AG04450 (cell line): ENCODE measurements at regions of chr2 and their contacts with region 1.

Region 1: DNA sequence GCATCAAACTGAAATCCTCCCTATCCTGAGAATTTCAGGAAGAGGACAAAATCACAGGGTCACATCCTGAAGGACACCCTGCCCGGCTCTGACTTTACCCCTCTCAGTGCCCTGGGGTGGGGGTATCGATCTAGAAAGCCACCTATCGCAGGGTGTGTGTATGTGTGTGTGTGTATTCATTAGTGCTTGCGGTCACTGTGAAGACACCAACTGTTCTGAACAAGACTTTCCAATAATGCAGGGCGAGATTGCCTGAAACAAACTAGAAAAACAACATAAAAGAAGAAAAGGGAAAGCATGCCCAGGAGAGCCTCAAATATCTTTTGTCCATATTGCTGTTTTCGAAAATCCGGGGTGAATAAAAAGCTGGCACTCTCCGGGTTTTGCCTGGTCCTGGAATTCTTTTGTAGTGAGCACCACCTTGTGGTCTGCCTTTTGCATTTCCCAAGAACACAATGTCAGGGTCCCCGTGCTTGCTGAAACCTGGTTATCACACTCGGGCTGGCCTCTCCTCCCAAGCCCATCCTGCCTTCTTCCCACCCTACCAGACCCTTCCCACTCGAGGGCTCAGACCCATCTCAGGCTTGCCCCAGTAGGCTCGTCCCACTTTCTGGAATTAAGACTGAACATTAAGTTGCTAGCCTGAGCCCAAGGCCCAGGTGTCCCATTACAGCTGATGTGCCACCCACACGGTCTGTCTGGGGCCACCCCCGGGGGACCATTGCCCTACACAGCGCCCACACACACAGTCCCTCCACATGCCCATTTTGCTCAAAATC is 25.0 kb upstream of the COPS8 start:
- DNase-seq: peak; percentile 30
- H3K4me3 ChIP-seq: no peak overlapping the region
- H3K27ac ChIP-seq: no peak overlapping the region
- H3K27me3 ChIP-seq: no peaks in the 10 kb centered on the region
- CTCF ChIP-seq: peak; percentile 73

Region 2: GRCh38 chr2:236343400-236344161 is 717.1 kb before region 1 on chr2:
- CTCF ChIA-PET with region 1: interaction called, 43 read pairs
- POLR2A ChIA-PET with region 1: no interaction called
- DNase-seq: peak; percentile 39
- H3K4me3 ChIP-seq: no peak overlapping the region
- H3K27ac ChIP-seq: no peak overlapping the region
- H3K27me3 ChIP-seq: no peaks in the 10 kb centered on the region
- CTCF ChIP-seq: peak; percentile 92

Region 3: GRCh38 chr2:236352761-236353593 is 707.7 kb before region 1 on chr2:
- CTCF ChIA-PET with region 1: interaction called, 57 read pairs
- POLR2A ChIA-PET with region 1: no interaction called
- DNase-seq: no peak
- H3K4me3 ChIP-seq: no peak overlapping the region
- H3K27ac ChIP-seq: no peak overlapping the region
- H3K27me3 ChIP-seq: peaks cover 3% of the 10 kb centered on the region
- CTCF ChIP-seq: peak; percentile 82

Region 4: DNA sequence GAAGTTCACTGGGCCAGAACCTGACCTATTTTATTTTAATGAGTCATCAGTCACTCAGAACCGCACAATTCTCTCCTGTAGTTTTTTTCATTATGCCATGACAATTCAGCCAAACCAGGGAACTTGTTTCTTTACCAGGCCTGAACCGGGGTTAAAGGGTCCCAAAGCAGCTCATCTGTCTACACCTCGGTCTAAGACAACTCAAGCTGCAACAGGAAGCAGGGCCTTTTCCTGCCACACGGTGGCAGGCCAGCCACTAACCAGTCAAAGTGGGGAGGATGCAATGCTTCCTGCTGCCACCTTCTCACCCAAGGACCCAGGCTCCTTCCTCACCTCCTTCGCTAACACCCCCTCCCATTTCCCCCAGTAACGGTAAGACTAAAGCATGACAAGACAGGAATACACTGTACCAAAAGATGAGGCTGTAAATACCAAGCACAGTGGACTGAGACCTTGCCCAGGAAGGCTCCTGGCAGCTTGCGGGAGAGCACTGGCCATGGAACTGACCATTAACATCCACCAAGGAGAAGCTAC is 547.8 kb before region 1 on chr2:
- CTCF ChIA-PET with region 1: interaction called, 51 read pairs
- POLR2A ChIA-PET with region 1: no interaction called
- DNase-seq: no peak
- H3K4me3 ChIP-seq: no peak overlapping the region
- H3K27ac ChIP-seq: no peak overlapping the region
- H3K27me3 ChIP-seq: peaks cover 3% of the 10 kb centered on the region
- CTCF ChIP-seq: peak; percentile 73

Region 5: GRCh38 chr2:236904389-236905280 is 156.1 kb before region 1 on chr2:
- CTCF ChIA-PET with region 1: no interaction called
- POLR2A ChIA-PET with region 1: no interaction called
- DNase-seq: no peak
- H3K4me3 ChIP-seq: no peak overlapping the region
- H3K27ac ChIP-seq: no peak overlapping the region
- H3K27me3 ChIP-seq: peaks cover 22% of the 10 kb centered on the region
- CTCF ChIP-seq: no peak

Region 6: DNA sequence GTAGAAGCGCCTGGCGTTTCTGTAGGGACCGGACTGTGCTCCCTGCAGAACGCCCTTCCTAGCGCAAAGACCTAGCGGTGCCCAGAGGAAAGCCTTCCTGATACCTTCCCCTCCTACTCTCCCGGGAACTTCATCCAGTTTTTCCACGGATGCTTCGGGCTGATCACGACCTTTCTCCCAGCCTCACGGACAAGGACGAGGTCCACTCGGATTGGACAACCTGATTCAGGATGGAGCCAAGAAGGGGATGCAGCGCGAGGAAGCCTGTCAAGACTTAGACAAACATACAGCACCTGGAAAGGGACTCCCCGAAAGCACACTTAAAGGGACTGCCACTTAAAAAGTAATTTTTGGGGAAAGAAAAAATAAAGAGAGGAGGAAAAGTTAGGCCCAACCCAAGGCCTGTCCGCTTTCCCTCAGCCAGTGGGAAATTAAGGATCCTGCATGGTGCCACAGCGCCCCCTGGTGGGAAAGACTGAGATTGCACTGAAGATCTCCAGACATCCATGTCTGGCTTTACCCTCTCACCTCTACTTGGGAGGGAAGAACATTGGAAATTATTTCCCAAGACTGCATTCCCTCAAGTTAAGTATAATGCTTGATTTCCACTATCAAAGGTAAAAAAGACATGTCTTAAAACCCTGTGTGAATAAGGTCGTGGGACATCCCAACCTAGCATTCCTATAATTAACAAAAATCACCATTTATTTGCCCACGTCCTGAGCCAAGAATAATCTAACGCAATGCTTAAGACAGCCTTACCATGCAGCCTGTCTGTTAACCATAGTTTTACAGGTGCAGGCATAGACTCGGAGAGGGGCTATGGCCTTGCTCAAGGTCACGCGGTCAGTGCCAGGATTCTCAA is 11.6 kb after region 1 on chr2:
- CTCF ChIA-PET with region 1: interaction called, 10 read pairs
- POLR2A ChIA-PET with region 1: no interaction called
- DNase-seq: no peak
- H3K4me3 ChIP-seq: no peak overlapping the region
- H3K27ac ChIP-seq: no peak overlapping the region
- H3K27me3 ChIP-seq: no peaks in the 10 kb centered on the region
- CTCF ChIP-seq: peak; percentile 89

Region 7: GRCh38 chr2:237085248-237086221 is 24.8 kb after region 1 on chr2 and contains the start of gene COPS8:
- CTCF ChIA-PET with region 1: no interaction called
- POLR2A ChIA-PET with region 1: no interaction called
- DNase-seq: peak; percentile 74
- H3K4me3 ChIP-seq: peak within 1 kb of the TSS; percentile 87
- H3K27ac ChIP-seq: peak within 1 kb of the TSS; percentile 83
- H3K27me3 ChIP-seq: no peaks in the 10 kb centered on the region
- CTCF ChIP-seq: peak; percentile 33
- polyA plus RNA-seq, gene COPS8: 94.6 and 139 TPM in 2 replicates

Region 8: GRCh38 chr2:239006622-239007300 is 1946.0 kb after region 1 on chr2:
- CTCF ChIA-PET with region 1: no interaction called
- POLR2A ChIA-PET with region 1: no interaction called
- DNase-seq: no peak
- H3K4me3 ChIP-seq: no peak overlapping the region
- H3K27ac ChIP-seq: no peak overlapping the region
- H3K27me3 ChIP-seq: peaks cover 42% of the 10 kb centered on the region
- CTCF ChIP-seq: no peak